K562 (cell line): ENCODE measurements at regions of chr6 and their contacts with region 1.

Region 1: GRCh38 chr6:32118782-32119628 is 9.0 kb downstream of the ATF6B start:
- DNase-seq: peak; percentile 86 to 93 (median 88)
- ATAC-seq: peak; percentile 96
- H3K4me3 ChIP-seq: no peak overlapping the region
- H3K27ac ChIP-seq: peak overlapping the region; percentile 43; the same call in 2 of the 3 replicates
- H3K4me1 ChIP-seq: peaks cover 7 to 8% of the 10 kb centered on the region in 2 experiments; a peak in 4 of 5 replicates
- H3K27me3 ChIP-seq: no peaks in the 10 kb centered on the region
- CTCF ChIP-seq: peak; percentile 98
- EP300 ChIP-seq: 0 out of 2 replicates have a peak, but pooled peaks have one; percentile 7
- POLR2A ChIP-seq: no peak
- RAD21 ChIP-seq: peak; percentile 98 to 99

Region 2: GRCh38 chr6:31568537-31568961 is 550.5 kb before region 1 on chr6:
- CTCF ChIA-PET with region 1: no interaction called
- POLR2A ChIA-PET with region 1: no interaction called
- in situ Hi-C with region 1: no loop called
- intact Hi-C with region 1: no loop called
- DNase-seq: no peak
- ATAC-seq: no peak
- H3K4me3 ChIP-seq: no peak overlapping the region
- H3K27ac ChIP-seq: no peak overlapping the region
- H3K4me1 ChIP-seq: peaks cover 5 to 18% of the 10 kb centered on the region in 2 experiments; a peak in 4 of 5 replicates
- H3K27me3 ChIP-seq: no peaks in the 10 kb centered on the region
- CTCF ChIP-seq: no peak
- EP300 ChIP-seq: no peak
- POLR2A ChIP-seq: no peak
- RAD21 ChIP-seq: no peak

Region 3: GRCh38 chr6:31901953-31902643 is 216.9 kb before region 1 on chr6 and contains the start of gene ZBTB12:
- CTCF ChIA-PET with region 1: no interaction called
- POLR2A ChIA-PET with region 1: no interaction called
- in situ Hi-C with region 1: no loop called
- intact Hi-C with region 1: loop called (anchors 5 kb)
- DNase-seq: peak; percentile 98
- ATAC-seq: peak; percentile 84
- H3K4me3 ChIP-seq: peak within 1 kb of the TSS; percentile 75
- H3K27ac ChIP-seq: peak within 1 kb of the TSS; percentile 84
- H3K4me1 ChIP-seq: peaks cover 31 to 36% of the 10 kb centered on the region in 2 experiments; a peak in 4 of 5 replicates
- H3K27me3 ChIP-seq: no peaks in the 10 kb centered on the region
- CTCF ChIP-seq: peak in 1 of 3 experiments; percentile 15; a peak in 1 of 6 replicates
- EP300 ChIP-seq: no peak
- POLR2A ChIP-seq: peak; percentile 72
- RAD21 ChIP-seq: peak; percentile 41 to 50
- polyA plus RNA-seq, gene ZBTB12: 0.03 TPM in 1 of 2 experiments, not detected in the other

Region 4: DNA sequence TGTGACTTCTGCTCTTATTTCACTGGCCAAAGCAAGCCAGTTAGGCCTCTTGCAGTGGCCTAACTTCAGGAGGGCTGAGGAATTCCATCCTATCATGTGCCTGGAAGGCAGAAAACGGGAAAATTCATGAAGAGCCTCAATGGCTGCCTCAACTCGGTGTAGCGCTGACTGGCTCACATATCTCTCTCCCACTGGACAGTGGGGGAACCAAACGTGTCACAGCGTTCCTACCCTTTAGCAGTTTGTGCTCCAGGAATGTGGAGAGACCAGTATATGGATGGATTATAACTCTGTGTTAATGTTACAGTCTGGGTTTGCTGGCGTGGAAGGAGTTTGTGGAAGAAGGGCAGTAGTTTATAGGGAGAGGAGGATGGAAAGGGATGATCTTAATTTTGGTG is 203.3 kb before region 1 on chr6:
- CTCF ChIA-PET with region 1: no interaction called
- POLR2A ChIA-PET with region 1: no interaction called
- in situ Hi-C with region 1: no loop called
- intact Hi-C with region 1: no loop called
- DNase-seq: no peak
- ATAC-seq: no peak
- H3K4me3 ChIP-seq: no peak overlapping the region
- H3K27ac ChIP-seq: no peak overlapping the region
- H3K4me1 ChIP-seq: peaks cover 0 to 8% of the 10 kb centered on the region in 2 experiments; a peak in 1 of 5 replicates
- H3K27me3 ChIP-seq: no peaks in the 10 kb centered on the region
- CTCF ChIP-seq: no peak
- EP300 ChIP-seq: no peak
- POLR2A ChIP-seq: no peak
- RAD21 ChIP-seq: no peak

Region 5: GRCh38 chr6:32076321-32076809 is 42.6 kb before region 1 on chr6:
- CTCF ChIA-PET with region 1: no interaction called
- POLR2A ChIA-PET with region 1: no interaction called
- in situ Hi-C with region 1: no loop called
- intact Hi-C with region 1: no loop called
- DNase-seq: no peak
- ATAC-seq: no peak
- H3K4me3 ChIP-seq: no peak overlapping the region
- H3K27ac ChIP-seq: no peak overlapping the region
- H3K4me1 ChIP-seq: peaks cover 9 to 11% of the 10 kb centered on the region in 2 experiments
- H3K27me3 ChIP-seq: peaks cover 31 to 48% of the 10 kb centered on the region in 2 experiments
- CTCF ChIP-seq: no peak
- EP300 ChIP-seq: no peak
- POLR2A ChIP-seq: no peak
- RAD21 ChIP-seq: no peak

Region 6: DNA sequence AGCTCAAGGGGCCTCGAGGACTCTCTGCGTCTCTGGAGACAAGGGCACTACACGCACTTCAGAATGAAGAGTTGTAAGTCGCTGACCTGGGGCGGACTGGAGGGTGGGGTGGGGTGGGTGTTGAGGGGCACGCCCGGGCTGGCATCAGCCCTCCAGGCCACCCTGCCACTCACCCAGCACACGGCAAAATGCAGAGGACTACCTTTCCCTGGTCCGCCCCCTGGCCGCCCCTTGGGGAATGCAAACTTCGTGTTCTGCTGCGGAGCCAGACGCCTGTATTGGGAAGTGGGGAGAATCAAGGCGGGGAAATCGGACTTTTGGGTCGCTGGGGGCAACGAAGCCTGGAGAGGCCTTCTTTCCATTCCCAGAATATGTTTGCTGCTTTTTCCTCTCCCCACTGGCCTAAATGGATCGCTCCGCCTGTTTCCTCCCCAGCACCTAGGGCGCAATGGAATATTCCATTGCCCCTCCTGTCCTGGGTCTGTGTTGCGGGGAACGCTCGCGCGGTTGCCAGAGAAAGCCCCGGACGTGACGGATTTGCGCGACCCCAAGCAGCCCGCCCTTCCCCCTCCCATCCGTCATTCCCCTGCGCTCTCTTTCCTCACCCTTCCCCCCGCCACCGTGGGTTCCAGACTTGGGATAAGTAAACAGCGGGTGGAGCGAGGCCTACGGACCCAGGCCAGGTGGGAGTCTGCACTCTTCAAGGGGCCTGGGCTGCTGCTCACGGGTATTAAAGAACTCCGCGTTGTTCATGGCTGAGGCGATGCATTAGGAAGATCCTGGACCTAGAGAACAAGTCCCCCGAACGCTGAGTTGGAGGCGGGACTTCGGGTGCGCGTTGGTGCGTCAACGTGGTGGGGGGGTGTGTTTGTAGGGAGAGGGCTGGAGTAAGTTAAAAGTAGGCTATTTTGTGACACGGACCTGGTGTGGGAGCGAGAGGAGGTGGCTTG is 34.8 kb after region 1 on chr6 and contains the start of gene PPT2:
- CTCF ChIA-PET with region 1: interaction called, 51 read pairs
- POLR2A ChIA-PET with region 1: no interaction called
- in situ Hi-C with region 1: no loop called
- intact Hi-C with region 1: loop called (anchors 1 kb)
- DNase-seq: peak; percentile 88 to 97 (median 92)
- ATAC-seq: peak; percentile 83
- H3K4me3 ChIP-seq: peak within 1 kb of the TSS; percentile 65
- H3K27ac ChIP-seq: peak within 1 kb of the TSS; percentile 89
- H3K4me1 ChIP-seq: peaks cover 25 to 62% of the 10 kb centered on the region in 2 experiments; a peak in 4 of 5 replicates
- H3K27me3 ChIP-seq: no peaks in the 10 kb centered on the region
- CTCF ChIP-seq: peak; percentile 36 to 47 (median 40); a peak in 4 of 6 replicates
- EP300 ChIP-seq: peak; percentile 34; the same call in 1 of the 2 replicates
- POLR2A ChIP-seq: peak; percentile 82
- RAD21 ChIP-seq: peak; percentile 15 to 30; a peak in 3 of 4 replicates
- polyA plus RNA-seq, gene PPT2: 27.4 to 41.6 TPM

Region 7: DNA sequence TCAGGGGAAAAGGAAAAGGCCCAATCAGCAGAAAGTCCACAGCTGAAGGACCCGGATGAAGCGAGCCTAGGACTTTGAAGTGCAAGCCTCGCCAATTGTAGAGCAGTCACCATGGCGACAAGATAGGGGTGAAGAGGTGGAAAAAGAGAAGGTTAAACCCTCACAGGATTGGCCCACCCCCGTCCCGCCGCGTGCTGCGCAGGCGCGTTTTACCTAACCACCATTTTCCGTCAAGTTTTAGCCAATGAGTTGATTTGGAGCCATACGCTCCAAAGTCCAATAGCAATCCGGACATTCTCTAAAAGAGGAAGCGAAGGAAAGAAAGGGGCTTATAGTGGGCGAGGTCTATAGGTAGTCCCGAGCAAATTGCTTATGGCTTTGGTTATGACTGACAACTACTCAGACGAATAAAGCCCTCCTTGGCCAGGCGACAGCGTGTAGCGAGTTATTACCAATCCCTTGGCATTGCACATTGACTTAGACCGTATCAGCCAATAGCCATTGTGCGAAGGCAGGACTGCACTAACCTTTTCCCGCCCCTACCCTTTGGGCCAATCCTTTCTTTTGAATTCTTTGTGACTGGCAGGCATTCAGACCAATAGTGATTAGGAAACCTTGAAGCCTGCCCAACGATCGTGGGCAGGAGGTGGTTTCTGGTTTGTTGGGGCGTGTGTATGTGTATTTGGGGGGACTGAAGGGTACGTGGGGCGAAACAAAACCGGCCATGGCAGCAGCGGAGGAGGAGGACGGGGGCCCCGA is 59.0 kb after region 1 on chr6 and contains the start of gene RNF5:
- CTCF ChIA-PET with region 1: interaction called, 5 read pairs
- POLR2A ChIA-PET with region 1: interaction called, 6 read pairs
- in situ Hi-C with region 1: no loop called
- intact Hi-C with region 1: loop called (anchors 2 kb)
- DNase-seq: peak; percentile 95 to 100 (median 97)
- ATAC-seq: peak; percentile 85
- H3K4me3 ChIP-seq: peak within 1 kb of the TSS; percentile 88
- H3K27ac ChIP-seq: peak within 1 kb of the TSS; percentile 94
- H3K4me1 ChIP-seq: peaks cover 40 to 65% of the 10 kb centered on the region in 2 experiments
- H3K27me3 ChIP-seq: no peaks in the 10 kb centered on the region
- CTCF ChIP-seq: no peak
- EP300 ChIP-seq: no peak; the same call in 1 of the 2 replicates
- POLR2A ChIP-seq: peak; percentile 77
- RAD21 ChIP-seq: no peak
- polyA plus RNA-seq, gene RNF5: 62.2 to 95.5 TPM

Region 8: GRCh38 chr6:32234934-32235333 is 115.9 kb after region 1 on chr6:
- CTCF ChIA-PET with region 1: no interaction called
- POLR2A ChIA-PET with region 1: no interaction called
- in situ Hi-C with region 1: no loop called
- intact Hi-C with region 1: loop called (anchors 1 kb)
- DNase-seq: peak in 2 of 4 experiments; percentile 62 to 63
- ATAC-seq: peak; percentile 95
- H3K4me3 ChIP-seq: no peak overlapping the region
- H3K27ac ChIP-seq: no peak overlapping the region
- H3K4me1 ChIP-seq: no peaks in the 10 kb centered on the region
- H3K27me3 ChIP-seq: peaks cover 3 to 8% of the 10 kb centered on the region in 2 experiments; a peak in 2 of 5 replicates
- CTCF ChIP-seq: peak; percentile 64 to 97 (median 87)
- EP300 ChIP-seq: no peak
- POLR2A ChIP-seq: no peak
- RAD21 ChIP-seq: peak in 1 of 2 experiments; percentile 74; a peak in 2 of 4 replicates

Region 9: DNA sequence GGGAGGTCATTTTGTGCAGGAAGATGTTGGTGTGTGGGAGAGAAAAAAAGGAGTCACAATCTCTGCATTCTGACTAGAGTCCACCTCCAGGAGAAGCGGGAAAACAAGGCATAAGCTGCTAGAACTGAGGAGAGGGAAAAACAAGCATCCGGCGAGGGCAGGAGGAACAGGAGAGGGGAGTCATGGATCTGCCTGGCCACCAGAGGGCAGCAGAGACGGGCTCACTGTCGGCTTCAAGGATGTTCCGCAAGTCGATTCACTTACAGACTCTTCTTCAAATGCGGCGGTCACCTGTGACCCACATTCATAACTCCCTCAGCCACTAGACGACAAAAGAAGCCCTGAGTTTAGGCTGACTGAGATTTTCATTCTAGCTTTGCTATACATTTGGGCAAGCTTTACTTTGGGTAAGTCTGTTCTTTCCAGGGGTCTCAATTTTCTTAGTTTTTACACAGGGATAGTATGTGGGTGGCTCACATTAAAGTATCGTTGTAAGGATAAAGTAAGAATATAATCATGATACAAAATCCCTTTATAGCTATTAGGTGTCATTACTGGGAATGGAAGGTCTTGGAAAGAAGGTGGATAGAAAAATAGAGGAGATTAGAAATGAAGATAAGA is 294.5 kb after region 1 on chr6:
- CTCF ChIA-PET with region 1: no interaction called
- POLR2A ChIA-PET with region 1: interaction called, 3 read pairs
- in situ Hi-C with region 1: no loop called
- intact Hi-C with region 1: loop called (anchors 10 kb)
- DNase-seq: peak; percentile 78 to 86 (median 82)
- ATAC-seq: peak; percentile 95
- H3K4me3 ChIP-seq: no peak overlapping the region
- H3K27ac ChIP-seq: no peak overlapping the region
- H3K4me1 ChIP-seq: no peaks in the 10 kb centered on the region
- H3K27me3 ChIP-seq: peaks cover 2 to 16% of the 10 kb centered on the region in 2 experiments; a peak in 4 of 5 replicates
- CTCF ChIP-seq: peak; percentile 89 to 95 (median 94)
- EP300 ChIP-seq: no peak
- POLR2A ChIP-seq: no peak
- RAD21 ChIP-seq: peak; percentile 87 to 95

Region 10: GRCh38 chr6:32853541-32854375 is 734.8 kb after region 1 on chr6 and contains the starts of genes PSMB9 and TAP1:
- CTCF ChIA-PET with region 1: no interaction called
- POLR2A ChIA-PET with region 1: no interaction called
- in situ Hi-C with region 1: no loop called
- intact Hi-C with region 1: no loop called
- DNase-seq: peak; percentile 94 to 96 (median 95)
- ATAC-seq: peak; percentile 98
- H3K4me3 ChIP-seq: peak within 1 kb of the TSS; percentile 65
- H3K27ac ChIP-seq: peak within 1 kb of the TSS; percentile 61
- H3K4me1 ChIP-seq: peaks cover 27 to 30% of the 10 kb centered on the region in 2 experiments
- H3K27me3 ChIP-seq: peaks cover 17 to 47% of the 10 kb centered on the region in 2 experiments
- CTCF ChIP-seq: peak; percentile 91 to 98 (median 98)
- EP300 ChIP-seq: 0 out of 2 replicates have a peak, but pooled peaks have one; percentile 33
- POLR2A ChIP-seq: no peak; the same call in 1 of the 2 replicates
- RAD21 ChIP-seq: peak; percentile 84 to 87
- polyA plus RNA-seq, gene PSMB9: 1.9 to 2.8 TPM
- polyA plus RNA-seq, gene TAP1: 1.3 to 1.7 TPM